Endothelial cell of umbilical vein (primary cell): ENCODE measurements at regions of chr16 and their contacts with region 1.

Region 1: GRCh38 chr16:89171463-89172170 is at the start of gene CDH15:
- DNase-seq: peak; percentile 88
- H3K4me3 ChIP-seq: no peak within 1 kb of the TSS
- H3K27ac ChIP-seq: no peak within 1 kb of the TSS
- H3K4me1 ChIP-seq: peaks cover 3% of the 10 kb centered on the region
- H3K27me3 ChIP-seq: peaks cover 0 to 3% of the 10 kb centered on the region in 2 experiments
- CTCF ChIP-seq: no peak
- POLR2A ChIP-seq: no peak
- total RNA-seq, gene CDH15: not detected in 2 replicates

Region 2: DNA sequence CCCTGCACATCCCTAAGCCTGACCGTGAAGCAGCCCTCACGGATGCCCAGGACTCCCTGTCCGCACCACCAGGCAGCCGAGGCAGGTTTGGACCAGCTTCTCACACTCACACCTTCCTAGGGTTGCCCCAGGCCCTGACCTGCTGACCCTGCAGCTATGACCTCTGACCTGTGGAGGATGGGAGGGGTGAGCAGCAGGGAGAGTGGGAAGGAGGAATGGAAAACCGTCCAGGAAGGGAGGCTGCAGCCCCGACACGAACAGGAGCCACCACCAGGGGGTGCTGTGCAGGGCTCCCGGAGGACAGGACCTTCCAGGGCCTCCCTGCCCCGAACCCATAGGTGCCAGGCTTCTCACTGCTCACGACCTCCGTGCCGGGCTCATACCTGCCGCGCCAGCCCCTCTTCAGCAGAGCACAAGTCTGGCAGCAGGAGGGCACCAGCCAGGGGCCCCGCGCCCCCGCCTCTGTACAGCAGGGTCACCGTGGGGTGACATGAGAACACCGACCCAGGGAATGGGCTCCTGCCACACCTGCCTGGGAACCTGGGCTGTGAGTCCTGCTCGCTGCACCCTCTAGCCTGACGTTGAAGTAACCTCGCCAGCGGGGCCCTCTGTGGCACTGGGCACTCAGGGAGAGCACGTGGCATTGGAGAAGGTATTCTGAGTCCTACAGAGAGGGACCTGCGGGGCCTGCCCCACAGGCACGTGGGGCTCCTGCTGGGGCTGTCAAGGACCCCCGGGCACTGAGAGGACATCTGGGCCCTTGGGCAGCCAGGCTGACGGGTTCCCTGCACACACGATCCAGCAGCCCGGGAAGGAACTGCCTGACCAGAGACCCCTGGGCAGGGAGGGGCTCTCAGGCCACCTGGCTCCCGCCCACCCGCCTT is 427.7 kb before region 1 on chr16:
- CTCF ChIA-PET with region 1: interaction called, 9 read pairs
- POLR2A ChIA-PET with region 1: no interaction called
- dilution Hi-C with region 1: no loop called
- intact Hi-C with region 1: loop called (anchors 1 kb)
- DNase-seq: peak; percentile 62
- H3K4me3 ChIP-seq: no peak overlapping the region
- H3K27ac ChIP-seq: no peak overlapping the region
- H3K4me1 ChIP-seq: peaks cover 7% of the 10 kb centered on the region
- H3K27me3 ChIP-seq: no peaks in the 10 kb centered on the region
- CTCF ChIP-seq: peak; percentile 90 to 95
- POLR2A ChIP-seq: no peak

Region 3: GRCh38 chr16:88811769-88812512 is 359.7 kb before region 1 on chr16 and contains the start of gene APRT:
- CTCF ChIA-PET with region 1: interaction called, 7 read pairs
- POLR2A ChIA-PET with region 1: no interaction called
- dilution Hi-C with region 1: no loop called
- intact Hi-C with region 1: loop called (anchors 1 kb)
- DNase-seq: peak; percentile 94
- H3K4me3 ChIP-seq: peak within 1 kb of the TSS; percentile 42 to 54 (median 52)
- H3K27ac ChIP-seq: peak within 1 kb of the TSS; percentile 49
- H3K4me1 ChIP-seq: peaks cover 17% of the 10 kb centered on the region
- H3K27me3 ChIP-seq: no peaks in the 10 kb centered on the region
- CTCF ChIP-seq: peak; percentile 16 to 37
- POLR2A ChIP-seq: peak; percentile 97
- total RNA-seq, gene APRT: 148 and 152 TPM in 2 replicates

Region 4: DNA sequence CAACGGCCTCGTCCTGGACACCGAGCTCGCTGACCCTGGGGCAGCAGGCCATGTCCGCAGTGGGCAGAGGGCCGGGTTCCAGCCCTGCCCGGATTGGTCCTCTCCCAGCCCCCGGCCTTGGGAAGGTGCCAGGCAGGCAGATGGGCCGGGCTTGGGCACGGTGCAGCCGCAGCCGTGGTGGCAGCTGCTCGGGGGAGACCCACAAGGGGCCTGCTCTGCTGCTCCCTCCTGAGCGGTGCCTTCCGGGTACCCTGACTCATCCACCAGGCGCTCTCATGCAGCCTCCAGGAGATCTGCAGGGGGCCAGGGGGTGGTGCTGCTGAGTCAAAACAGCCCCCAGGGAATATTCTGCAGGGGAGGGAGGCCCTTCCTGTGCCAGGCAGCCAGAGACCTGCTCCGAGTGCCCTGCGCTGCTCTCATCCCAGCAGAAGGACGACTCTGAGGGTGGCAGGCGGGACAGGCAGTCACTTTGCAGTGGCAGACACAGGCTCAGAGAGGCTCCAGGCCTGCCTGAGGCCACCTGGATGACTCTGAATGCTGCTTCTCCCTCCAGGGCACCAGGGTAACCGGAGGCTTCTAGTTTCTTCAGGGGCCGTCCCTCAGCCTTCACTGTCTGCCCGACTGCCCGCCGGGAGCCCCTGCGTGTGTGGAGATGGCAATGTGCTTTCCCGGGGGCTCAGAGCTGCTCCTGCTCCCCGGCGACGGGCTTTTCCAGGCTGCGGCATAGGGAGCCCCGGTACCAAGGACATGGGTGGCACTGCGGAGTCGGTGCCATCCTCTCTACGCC is 246.3 kb before region 1 on chr16:
- CTCF ChIA-PET with region 1: no interaction called
- POLR2A ChIA-PET with region 1: no interaction called
- dilution Hi-C with region 1: no loop called
- intact Hi-C with region 1: loop called (anchors 1 kb)
- DNase-seq: peak; percentile 67
- H3K4me3 ChIP-seq: no peak overlapping the region
- H3K27ac ChIP-seq: no peak overlapping the region
- H3K4me1 ChIP-seq: peaks cover 27% of the 10 kb centered on the region
- H3K27me3 ChIP-seq: no peaks in the 10 kb centered on the region
- CTCF ChIP-seq: peak; percentile 62 to 64
- POLR2A ChIP-seq: peak; percentile 24

Region 5: DNA sequence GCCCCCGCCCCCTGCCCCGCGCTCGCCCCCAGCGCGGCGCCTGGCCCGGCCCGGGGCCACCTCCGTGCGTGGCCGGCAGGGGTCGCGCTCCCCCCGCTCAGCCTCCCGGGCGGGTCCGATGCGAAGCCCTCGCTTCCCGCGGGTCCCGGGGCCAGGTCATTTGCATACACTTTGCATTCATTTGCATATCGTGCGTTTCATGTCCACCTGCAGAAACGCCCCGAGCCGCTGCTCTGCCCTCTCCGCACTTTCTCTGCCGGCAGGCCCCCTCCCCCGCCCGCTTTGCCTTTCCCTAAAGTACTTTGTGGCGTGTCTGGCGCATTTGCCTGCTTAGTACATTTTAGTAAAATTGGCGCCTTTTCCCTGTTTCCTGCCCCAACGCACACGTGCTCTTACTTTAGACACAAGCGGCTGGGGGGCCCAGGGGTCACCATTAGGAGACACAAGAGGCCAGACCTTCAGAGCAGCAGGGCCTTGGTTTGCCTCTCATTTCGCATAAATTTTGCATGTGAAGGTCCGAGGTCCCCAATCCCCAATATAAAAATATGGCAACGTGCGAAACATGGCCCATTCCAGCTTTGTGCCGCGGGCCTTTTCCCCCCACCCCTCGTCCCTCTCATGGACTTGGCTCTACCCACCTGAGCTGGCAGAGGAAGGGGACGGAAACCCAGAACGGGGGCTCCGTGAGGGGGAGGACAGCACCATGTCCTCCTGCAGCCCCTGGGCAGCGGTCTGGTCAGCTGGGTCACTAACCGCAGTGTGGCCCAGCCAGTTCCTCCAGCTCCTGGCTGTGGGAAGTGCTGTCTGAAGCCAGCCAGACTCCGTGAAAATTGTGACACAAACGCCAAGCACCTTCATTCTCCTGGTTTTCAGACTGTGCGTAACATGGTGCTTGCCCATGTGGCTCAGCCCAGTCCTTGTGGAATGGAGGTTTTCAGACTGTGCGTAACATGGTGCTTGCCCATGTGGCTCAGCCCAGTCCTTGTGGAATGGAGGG is 229.4 kb before region 1 on chr16:
- CTCF ChIA-PET with region 1: interaction called, 7 read pairs
- POLR2A ChIA-PET with region 1: no interaction called
- dilution Hi-C with region 1: no loop called
- intact Hi-C with region 1: loop called (anchors 5 kb)
- DNase-seq: no peak
- H3K4me3 ChIP-seq: no peak overlapping the region
- H3K27ac ChIP-seq: no peak overlapping the region
- H3K4me1 ChIP-seq: no peaks in the 10 kb centered on the region
- H3K27me3 ChIP-seq: peaks cover 26 to 32% of the 10 kb centered on the region in 2 experiments
- CTCF ChIP-seq: peak; percentile 55 to 67
- POLR2A ChIP-seq: no peak

Region 6: DNA sequence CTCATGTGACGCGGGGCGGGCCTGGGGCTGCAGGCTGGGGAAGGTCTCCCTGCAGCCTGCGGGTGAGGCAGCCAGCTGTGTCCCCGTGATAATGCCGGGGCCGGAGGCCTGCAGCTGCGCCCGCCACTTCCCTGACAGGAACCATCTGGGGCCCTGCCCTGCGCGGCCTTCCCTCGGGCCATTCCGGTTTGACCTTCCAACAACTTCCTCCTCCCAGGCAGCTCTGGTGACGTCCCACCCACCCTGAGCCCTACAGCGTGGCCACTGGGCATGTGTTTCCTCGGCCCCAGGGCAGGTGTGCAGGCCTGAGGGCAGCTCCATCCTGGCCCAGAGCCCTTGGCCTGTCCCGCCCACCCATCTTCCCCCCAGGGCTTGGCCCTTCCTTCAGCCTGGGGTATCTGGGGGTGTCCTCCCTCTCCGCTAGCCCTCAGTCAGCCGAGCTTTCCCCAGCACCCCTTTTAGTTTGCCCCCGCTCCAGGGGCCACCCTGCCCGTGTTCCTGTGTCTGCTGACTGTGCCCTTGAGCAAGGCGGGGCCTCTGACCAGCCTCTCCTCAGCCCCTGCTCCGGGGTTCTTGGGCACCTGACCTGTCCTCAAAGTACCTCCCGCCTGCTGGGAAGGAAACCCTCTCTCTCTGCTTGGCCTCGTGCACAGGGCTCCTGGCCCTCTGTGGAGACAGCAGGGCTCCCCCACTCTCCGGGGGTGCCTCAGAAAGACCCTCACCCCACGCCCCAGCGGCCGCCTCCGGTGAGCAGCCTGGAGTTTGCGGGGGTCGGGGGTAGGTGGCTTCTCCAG is 194.4 kb before region 1 on chr16 and contains the start of gene CBFA2T3:
- CTCF ChIA-PET with region 1: no interaction called
- POLR2A ChIA-PET with region 1: no interaction called
- dilution Hi-C with region 1: no loop called
- intact Hi-C with region 1: no loop called
- DNase-seq: peak; percentile 84
- H3K4me3 ChIP-seq: no peak within 1 kb of the TSS
- H3K27ac ChIP-seq: no peak within 1 kb of the TSS
- H3K4me1 ChIP-seq: peaks cover 4% of the 10 kb centered on the region
- H3K27me3 ChIP-seq: no peaks in the 10 kb centered on the region
- CTCF ChIP-seq: no peak
- POLR2A ChIP-seq: no peak
- total RNA-seq, gene CBFA2T3: not detected in 2 replicates

Region 7: GRCh38 chr16:89052890-89053592 is 118.6 kb before region 1 on chr16:
- CTCF ChIA-PET with region 1: no interaction called
- POLR2A ChIA-PET with region 1: no interaction called
- dilution Hi-C with region 1: no loop called
- intact Hi-C with region 1: no loop called
- DNase-seq: no peak
- H3K4me3 ChIP-seq: no peak overlapping the region
- H3K27ac ChIP-seq: no peak overlapping the region
- H3K4me1 ChIP-seq: no peaks in the 10 kb centered on the region
- H3K27me3 ChIP-seq: no peaks in the 10 kb centered on the region
- CTCF ChIP-seq: no peak
- POLR2A ChIP-seq: no peak

Region 8: GRCh38 chr16:89193021-89193575 is 21.5 kb after region 1 on chr16:
- CTCF ChIA-PET with region 1: no interaction called
- POLR2A ChIA-PET with region 1: no interaction called
- dilution Hi-C with region 1: no loop called
- intact Hi-C with region 1: loop called (anchors 1 kb)
- DNase-seq: peak; percentile 79
- H3K4me3 ChIP-seq: peak overlapping the region in 1 of 3 experiments; percentile 14
- H3K27ac ChIP-seq: no peak overlapping the region
- H3K4me1 ChIP-seq: no peaks in the 10 kb centered on the region
- H3K27me3 ChIP-seq: no peaks in the 10 kb centered on the region
- CTCF ChIP-seq: no peak
- POLR2A ChIP-seq: no peak

Region 9: DNA sequence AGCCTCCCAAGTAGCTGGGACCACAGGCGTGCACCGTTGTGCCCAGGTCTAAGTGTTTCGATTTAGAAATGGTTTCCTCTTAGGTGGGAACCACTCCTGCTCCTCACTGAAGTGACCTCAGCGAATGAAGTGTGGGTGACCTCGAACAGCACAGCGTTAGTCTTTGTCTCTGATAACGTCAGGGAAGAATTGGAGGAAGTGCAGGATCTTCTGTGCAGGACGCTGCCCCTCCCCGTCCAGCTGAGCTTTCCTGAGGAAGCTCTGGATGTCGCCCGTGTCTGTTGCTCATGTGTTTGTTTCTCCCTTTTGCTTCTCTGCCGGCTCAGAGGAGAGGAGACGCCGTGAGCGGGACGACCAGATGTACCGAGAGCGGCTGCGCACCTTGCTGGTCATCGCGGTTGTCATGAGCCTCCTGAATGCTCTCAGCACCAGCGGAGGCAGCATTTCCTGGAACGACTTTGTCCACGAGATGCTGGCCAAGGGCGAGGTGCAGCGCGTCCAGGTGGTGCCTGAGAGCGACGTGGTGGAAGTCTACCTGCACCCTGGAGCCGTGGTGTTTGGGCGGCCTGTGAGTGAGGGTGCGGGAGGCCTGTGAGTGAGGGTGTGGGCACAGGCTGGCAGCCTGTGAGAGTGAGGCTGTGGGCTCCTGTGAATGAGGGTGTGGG is 352.2 kb after region 1 on chr16:
- CTCF ChIA-PET with region 1: no interaction called
- POLR2A ChIA-PET with region 1: no interaction called
- dilution Hi-C with region 1: no loop called
- intact Hi-C with region 1: no loop called
- DNase-seq: peak; percentile 63
- H3K4me3 ChIP-seq: no peak overlapping the region
- H3K27ac ChIP-seq: peak overlapping the region; percentile 30
- H3K4me1 ChIP-seq: peaks cover 12% of the 10 kb centered on the region
- H3K27me3 ChIP-seq: no peaks in the 10 kb centered on the region
- CTCF ChIP-seq: no peak
- POLR2A ChIP-seq: no peak